ENCODE measurements at regions of chr22 and their contacts with region 1.

Region 1: GRCh38 chr22:45645526-45646414 is 25.9 kb upstream of the ATXN10 start:
- DNase-seq: peak; percentile 73
- ATAC-seq: peak; percentile 97
- H3K4me3 ChIP-seq: peak overlapping the region; percentile 55
- H3K27ac ChIP-seq: peak overlapping the region; percentile 44
- H3K4me1 ChIP-seq: peaks cover 10% of the 10 kb centered on the region
- H3K27me3 ChIP-seq: no peaks in the 10 kb centered on the region
- CTCF ChIP-seq: peak; percentile 76

Region 2: DNA sequence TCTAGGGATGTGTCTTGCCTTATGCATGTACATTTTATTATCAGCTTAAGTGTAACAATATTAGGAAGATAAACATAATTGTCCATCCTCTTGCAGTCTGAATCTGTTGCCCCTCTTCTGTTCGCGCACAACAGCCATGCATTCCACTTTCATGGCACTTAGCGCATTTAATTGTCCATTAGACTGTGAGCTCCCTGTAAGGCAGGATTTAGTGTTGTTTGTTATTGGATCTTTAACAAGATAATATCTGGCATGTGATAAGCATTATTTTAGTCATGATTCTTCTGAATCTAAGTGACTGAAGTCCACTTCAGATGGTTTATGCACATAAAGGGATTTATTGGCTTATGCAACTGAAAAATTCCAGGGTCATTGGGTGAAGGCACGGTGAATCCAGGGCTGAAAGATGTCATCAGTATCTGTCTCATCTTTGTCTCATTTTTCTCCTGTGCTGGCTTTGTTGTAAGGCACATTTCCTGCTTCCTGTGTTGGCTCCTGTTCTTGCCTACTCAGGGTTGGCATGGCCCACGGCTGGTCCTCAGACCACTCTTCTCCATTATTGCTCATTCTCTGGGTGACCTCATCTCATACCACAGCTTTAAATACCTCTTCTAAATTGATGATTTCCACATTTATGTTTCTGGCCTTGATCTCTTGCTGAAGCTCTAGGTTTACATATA is 63.4 kb after region 1 on chr22:
- CTCF ChIA-PET with region 1: no interaction called
- POLR2A ChIA-PET with region 1: no interaction called
- intact Hi-C with region 1: loop called (anchors 5 kb)
- DNase-seq: peak; percentile 74
- ATAC-seq: peak; percentile 91
- H3K4me3 ChIP-seq: no peak overlapping the region
- H3K27ac ChIP-seq: peak overlapping the region; percentile 87
- H3K4me1 ChIP-seq: peaks cover 29% of the 10 kb centered on the region
- H3K27me3 ChIP-seq: no peaks in the 10 kb centered on the region
- CTCF ChIP-seq: no peak

Measured in PC-3 (cell line).